Spleen (tissue), 13 donors: ENCODE measurements at regions of chrX and their contacts with region 1.

Region 1: GRCh38 chrX:17242470-17242869 is 132.5 kb upstream of the NHS start:
- DNase-seq: no peak
- H3K4me3 ChIP-seq: no peak overlapping the region
- H3K27ac ChIP-seq: no peak overlapping the region
- H3K4me1 ChIP-seq: no peaks in the 10 kb centered on the region
- H3K27me3 ChIP-seq: no peaks in the 10 kb centered on the region
- CTCF ChIP-seq: peak in 10 of 11 experiments; percentile 38 to 74 (median 64)
- POLR2A ChIP-seq: no peak

Region 2: DNA sequence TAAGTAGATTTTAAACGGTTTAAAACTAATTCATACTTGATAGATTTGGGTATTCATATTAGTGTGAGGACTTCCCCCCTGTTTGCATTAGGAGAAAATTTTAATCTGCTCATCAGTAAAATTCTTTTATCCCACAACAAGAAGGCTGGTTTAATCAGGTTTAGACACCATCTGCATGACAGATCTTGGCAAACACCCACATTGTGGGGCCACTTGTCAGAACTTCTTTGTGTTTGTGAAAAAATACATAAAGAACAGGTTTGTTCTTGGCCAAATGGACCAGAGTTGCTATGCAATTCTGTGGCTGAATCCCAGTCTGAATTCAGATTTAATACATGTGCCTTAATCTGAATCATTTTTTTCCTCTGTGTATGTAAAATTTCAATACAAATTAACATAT is 174.9 kb before region 1 on chrX:
- intact Hi-C with region 1: no loop called
- DNase-seq: no peak
- H3K4me3 ChIP-seq: no peak overlapping the region
- H3K27ac ChIP-seq: no peak overlapping the region
- H3K4me1 ChIP-seq: no peaks in the 10 kb centered on the region
- H3K27me3 ChIP-seq: no peaks in the 10 kb centered on the region
- CTCF ChIP-seq: no peak
- POLR2A ChIP-seq: no peak

Region 3: GRCh38 chrX:17160971-17161370 is 81.5 kb before region 1 on chrX:
- intact Hi-C with region 1: no loop called
- DNase-seq: no peak
- H3K4me3 ChIP-seq: no peak overlapping the region
- H3K27ac ChIP-seq: no peak overlapping the region
- H3K4me1 ChIP-seq: no peaks in the 10 kb centered on the region
- H3K27me3 ChIP-seq: no peaks in the 10 kb centered on the region
- CTCF ChIP-seq: no peak
- POLR2A ChIP-seq: no peak

Region 4: DNA sequence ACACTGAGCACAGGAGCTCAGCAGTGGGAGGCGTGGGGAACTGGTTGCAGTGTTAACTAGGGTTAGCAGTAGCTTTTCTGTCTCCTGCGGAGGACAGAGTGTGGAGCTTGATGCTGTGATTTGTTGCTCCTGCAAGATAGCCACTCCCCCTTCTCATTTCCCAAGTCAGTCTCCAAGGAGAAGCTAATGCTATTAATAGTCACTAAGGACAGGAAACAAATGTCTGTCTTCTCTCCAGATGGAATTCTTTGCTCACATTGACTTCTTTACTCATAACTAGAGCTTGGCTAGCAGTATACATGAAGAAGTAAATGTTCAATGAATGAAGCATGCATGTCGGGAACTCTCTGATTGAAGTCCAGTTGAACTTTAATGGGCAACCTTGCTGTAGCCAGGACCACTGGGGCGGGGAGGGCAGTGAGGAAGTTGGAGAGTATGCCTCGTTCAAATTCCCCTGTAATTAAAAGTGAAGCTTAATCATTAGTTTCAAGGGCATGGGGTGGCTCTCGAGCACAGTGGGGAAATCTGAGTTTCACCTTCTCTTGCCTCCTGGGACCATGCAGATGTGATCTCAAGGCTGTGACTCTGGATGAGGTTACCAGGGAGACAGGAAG is 338.2 kb after region 1 on chrX:
- intact Hi-C with region 1: loop called (anchors 10 kb)
- DNase-seq: no peak
- H3K4me3 ChIP-seq: no peak overlapping the region
- H3K27ac ChIP-seq: peak overlapping the region in 4 of 8 donors; percentile 30 to 43 (median 40)
- H3K4me1 ChIP-seq: no peaks in the 10 kb centered on the region
- H3K27me3 ChIP-seq: peaks cover 0 to 28% (median 0%) of the 10 kb centered on the region in 7 donors
- CTCF ChIP-seq: no peak
- POLR2A ChIP-seq: no peak

Region 5: GRCh38 chrX:17689971-17690409 is 447.5 kb after region 1 on chrX:
- intact Hi-C with region 1: loop called (anchors 5 kb)
- DNase-seq: no peak
- H3K4me3 ChIP-seq: no peak overlapping the region
- H3K27ac ChIP-seq: no peak overlapping the region
- H3K4me1 ChIP-seq: no peaks in the 10 kb centered on the region
- H3K27me3 ChIP-seq: peaks cover 0 to 8% (median 0%) of the 10 kb centered on the region in 7 donors
- CTCF ChIP-seq: peak; percentile 12 to 60 (median 55)
- POLR2A ChIP-seq: no peak